A673 (cell line): ENCODE measurements at regions of chr2 and their contacts with region 1.

Region 1: GRCh38 chr2:187499941-187500532 is 52.0 kb upstream of the CALCRL start:
- DNase-seq: peak; percentile 80
- H3K4me3 ChIP-seq: no peak overlapping the region
- H3K27ac ChIP-seq: no peak overlapping the region
- H3K4me1 ChIP-seq: peaks cover 47% of the 10 kb centered on the region
- H3K27me3 ChIP-seq: no peaks in the 10 kb centered on the region
- CTCF ChIP-seq: peak; percentile 85

Region 2: DNA sequence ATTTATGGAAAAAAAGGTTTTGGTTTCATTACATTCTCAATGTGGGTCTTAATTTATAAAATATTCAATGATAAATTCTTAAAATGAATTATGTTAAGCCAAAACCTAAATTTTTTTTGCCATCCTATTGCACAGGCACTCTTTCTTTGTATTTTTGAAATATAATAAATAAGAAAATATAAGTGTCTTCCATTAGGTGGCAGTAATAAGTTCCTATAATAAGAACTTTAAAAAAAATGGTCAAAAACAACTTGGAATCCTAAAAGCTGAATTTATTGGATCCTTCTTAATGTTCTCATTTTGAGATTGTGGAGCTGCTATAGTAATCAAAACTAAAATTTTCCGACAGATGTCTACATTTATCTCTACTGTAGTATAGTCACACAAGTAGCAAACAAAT is 57.7 kb before region 1 on chr2:
- CTCF ChIA-PET with region 1: no interaction called
- POLR2A ChIA-PET with region 1: no interaction called
- intact Hi-C with region 1: no loop called
- DNase-seq: peak; percentile 24
- H3K4me3 ChIP-seq: no peak overlapping the region
- H3K27ac ChIP-seq: no peak overlapping the region
- H3K4me1 ChIP-seq: peaks cover under 1% of the 10 kb centered on the region
- H3K27me3 ChIP-seq: no peaks in the 10 kb centered on the region
- CTCF ChIP-seq: peak; percentile 49; the same call in 1 of the 2 replicates

Region 3: DNA sequence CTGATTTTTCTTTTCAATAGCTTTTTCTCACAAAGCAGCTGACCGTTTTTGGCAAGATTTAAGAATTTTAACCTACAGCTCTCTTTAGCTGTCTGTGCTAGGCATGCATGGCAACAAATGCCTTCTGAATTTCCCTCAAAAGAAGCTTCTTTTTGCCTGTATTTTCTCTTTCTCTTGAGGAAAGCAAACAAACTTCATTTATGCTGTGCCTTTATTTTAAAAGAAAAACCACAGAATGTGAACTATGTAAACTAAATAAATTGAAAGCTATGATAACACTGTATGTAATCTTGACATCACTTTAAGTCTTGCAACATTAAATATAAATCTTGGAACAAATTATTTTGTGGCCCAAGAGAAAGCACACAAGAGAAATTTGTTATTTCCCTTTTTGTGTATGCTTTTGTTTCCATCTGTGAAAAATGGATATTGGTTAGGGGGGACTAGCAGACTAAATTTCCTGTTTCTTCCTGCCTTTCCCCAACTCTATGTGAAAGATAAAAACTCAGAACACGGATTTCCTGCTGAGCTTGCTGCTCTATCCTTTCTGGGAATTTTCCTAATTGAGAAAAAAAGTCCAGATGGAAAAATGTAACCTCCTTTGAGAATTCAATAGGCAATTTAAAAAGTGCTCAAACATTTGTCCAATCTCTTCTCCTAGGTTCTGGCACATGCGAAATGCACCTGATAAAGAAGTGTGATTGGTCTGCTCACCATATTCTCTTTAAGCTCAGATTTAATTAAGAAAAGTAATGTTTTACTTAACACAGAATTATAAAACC is 75.1 kb after region 1 on chr2:
- CTCF ChIA-PET with region 1: interaction called, 46 read pairs
- POLR2A ChIA-PET with region 1: no interaction called
- intact Hi-C with region 1: loop called (anchors 1 kb)
- DNase-seq: no peak
- H3K4me3 ChIP-seq: peak overlapping the region; percentile 0
- H3K27ac ChIP-seq: peak overlapping the region; percentile 58
- H3K4me1 ChIP-seq: peaks cover 26% of the 10 kb centered on the region
- H3K27me3 ChIP-seq: no peaks in the 10 kb centered on the region
- CTCF ChIP-seq: no peak

Region 4: GRCh38 chr2:187594801-187595200 is 94.8 kb after region 1 on chr2:
- CTCF ChIA-PET with region 1: interaction called, 13 read pairs
- POLR2A ChIA-PET with region 1: no interaction called
- intact Hi-C with region 1: no loop called
- DNase-seq: no peak
- H3K4me3 ChIP-seq: no peak overlapping the region
- H3K27ac ChIP-seq: no peak overlapping the region
- H3K4me1 ChIP-seq: no peaks in the 10 kb centered on the region
- H3K27me3 ChIP-seq: no peaks in the 10 kb centered on the region
- CTCF ChIP-seq: no peak; the same call in 1 of the 2 replicates

Region 5: GRCh38 chr2:188512456-188512855 is 1012.4 kb after region 1 on chr2:
- CTCF ChIA-PET with region 1: no interaction called
- POLR2A ChIA-PET with region 1: no interaction called
- intact Hi-C with region 1: loop called (anchors 1 kb)
- DNase-seq: peak; percentile 78
- H3K4me3 ChIP-seq: no peak overlapping the region
- H3K27ac ChIP-seq: no peak overlapping the region
- H3K4me1 ChIP-seq: peaks cover 8% of the 10 kb centered on the region
- H3K27me3 ChIP-seq: no peaks in the 10 kb centered on the region
- CTCF ChIP-seq: peak; percentile 71